Activated T-helper 1 cell treated with anti-CD3 and anti-CD28 coated beads, Interleukin-12 subunit alpha, Interleukin-12 subunit beta, Interleukin-2, Interleukin-4 antibody, amounts not matched to agents 30 ng/mL and 10 ng/mL and 1 ng/mL, durations not matched to agents 14 hours and 24 hours and 36 hours (primary cell): ENCODE measurements at regions of chr4 and their contacts with region 1.

Region 1: DNA sequence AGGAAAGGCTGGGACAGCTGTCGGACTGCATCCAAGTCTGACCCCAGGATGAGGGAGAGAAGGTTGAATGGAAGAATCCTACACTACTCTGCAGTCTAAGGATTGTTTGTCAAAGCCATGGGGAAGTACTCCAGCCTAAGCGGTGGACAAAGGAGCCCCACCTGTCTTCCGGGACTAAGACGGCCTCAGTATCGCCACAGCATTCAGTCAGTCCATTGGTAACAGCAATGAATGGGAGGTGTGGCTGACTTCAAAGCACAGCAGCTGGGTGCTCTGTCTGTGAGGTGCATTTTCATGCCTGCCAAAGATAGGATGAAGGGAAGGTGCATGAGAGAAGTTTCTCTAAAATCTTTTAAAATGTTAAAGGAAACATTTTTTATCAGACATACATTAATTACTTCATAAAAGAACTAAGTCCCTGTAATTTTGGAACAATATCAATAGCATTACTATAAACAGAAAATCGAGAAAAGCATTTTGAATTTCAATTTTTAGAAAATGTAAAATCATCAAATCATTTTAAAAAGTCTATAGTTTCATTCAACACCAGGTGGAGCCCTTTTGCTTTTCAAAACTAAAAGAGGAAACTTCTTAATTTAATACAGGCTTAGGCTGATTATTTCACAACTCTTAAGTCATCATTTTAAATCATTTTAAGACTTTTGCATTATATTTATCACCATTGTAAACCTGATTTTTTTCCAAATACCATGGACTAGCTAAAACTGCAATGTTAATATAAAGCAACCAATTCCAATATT is 27.6 kb upstream of the INTU start:
- DNase-seq: no peak
- H3K4me3 Mint-ChIP-seq: no peak overlapping the region
- H3K27ac Mint-ChIP-seq: no peak overlapping the region
- H3K4me1 Mint-ChIP-seq: no peaks in the 10 kb centered on the region
- H3K27me3 Mint-ChIP-seq: peaks cover 4% of the 10 kb centered on the region

Region 2: GRCh38 chr4:127732613-127733328 is 127.6 kb after region 1 on chr4:
- intact Hi-C with region 1: loop called (anchors 1 kb)
- DNase-seq: no peak
- H3K4me3 Mint-ChIP-seq: no peak overlapping the region
- H3K27ac Mint-ChIP-seq: no peak overlapping the region
- H3K4me1 Mint-ChIP-seq: no peaks in the 10 kb centered on the region
- H3K27me3 Mint-ChIP-seq: peaks cover under 1% of the 10 kb centered on the region

Region 3: DNA sequence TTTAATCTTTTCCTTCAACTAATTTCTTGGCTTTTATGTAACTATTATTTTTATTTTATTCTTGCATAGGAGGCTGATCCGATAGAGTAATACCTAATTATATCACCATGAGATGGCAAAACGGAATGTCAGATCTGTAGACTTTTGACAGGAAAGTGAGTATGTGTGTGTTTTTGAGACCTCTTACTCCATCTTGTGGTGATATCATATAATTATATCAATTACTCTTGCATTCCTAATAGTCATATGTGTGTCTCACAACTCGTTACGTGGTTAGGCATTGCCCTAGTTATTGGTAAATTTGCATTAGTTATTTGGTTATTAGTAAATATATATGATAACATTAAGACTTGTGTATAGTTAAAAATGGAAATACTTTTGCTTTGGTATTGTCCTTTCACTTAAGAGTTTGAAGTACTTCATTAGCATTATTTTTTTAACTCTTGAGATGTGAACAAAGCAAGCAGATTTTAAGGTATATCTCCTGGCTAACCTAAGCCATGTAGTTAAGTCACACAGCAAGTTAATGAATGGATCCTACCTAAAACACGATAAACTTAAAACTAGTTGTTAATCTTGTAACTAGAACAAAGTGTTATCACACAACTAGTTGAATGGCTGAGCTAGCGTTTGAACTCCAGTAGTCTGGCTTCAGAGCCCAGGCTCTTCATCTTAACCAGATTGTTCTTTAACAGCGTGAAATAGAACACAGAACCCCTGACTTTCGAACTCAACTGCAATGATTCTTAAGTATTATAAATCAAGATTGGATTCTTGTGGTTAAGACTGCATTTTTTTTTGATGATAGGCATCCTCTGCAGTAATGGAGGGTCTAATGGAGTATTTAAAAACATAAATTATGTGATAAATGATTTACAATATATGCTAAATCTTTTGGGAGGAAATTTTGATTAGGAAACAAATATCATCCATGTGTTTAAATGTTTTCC is 615.4 kb after region 1 on chr4:
- intact Hi-C with region 1: loop called (anchors 10 kb)
- DNase-seq: no peak
- H3K4me3 Mint-ChIP-seq: no peak overlapping the region
- H3K27ac Mint-ChIP-seq: no peak overlapping the region
- H3K4me1 Mint-ChIP-seq: no peaks in the 10 kb centered on the region
- H3K27me3 Mint-ChIP-seq: no peaks in the 10 kb centered on the region